ENCODE measurements at regions of chr6 and their contacts with region 1.

Region 1: GRCh38 chr6:2524090-2524489 is 226.6 kb downstream of the MYLK4 start:
- DNase-seq: no peak
- ATAC-seq: no peak
- H3K4me3 ChIP-seq: no peak overlapping the region
- H3K4me3 Mint-ChIP-seq: no peak overlapping the region
- H3K27ac ChIP-seq: no peak overlapping the region
- H3K27ac Mint-ChIP-seq: no peak overlapping the region
- H3K4me1 ChIP-seq: no peaks in the 10 kb centered on the region
- H3K4me1 Mint-ChIP-seq: peaks cover 7 to 11% (median 8%) of the 10 kb centered on the region in 3 donors
- H3K27me3 ChIP-seq: peaks cover 0 to 12% of the 10 kb centered on the region in 2 experiments
- H3K27me3 Mint-ChIP-seq: peaks cover 23 to 34% of the 10 kb centered on the region in 2 donors

Region 2: DNA sequence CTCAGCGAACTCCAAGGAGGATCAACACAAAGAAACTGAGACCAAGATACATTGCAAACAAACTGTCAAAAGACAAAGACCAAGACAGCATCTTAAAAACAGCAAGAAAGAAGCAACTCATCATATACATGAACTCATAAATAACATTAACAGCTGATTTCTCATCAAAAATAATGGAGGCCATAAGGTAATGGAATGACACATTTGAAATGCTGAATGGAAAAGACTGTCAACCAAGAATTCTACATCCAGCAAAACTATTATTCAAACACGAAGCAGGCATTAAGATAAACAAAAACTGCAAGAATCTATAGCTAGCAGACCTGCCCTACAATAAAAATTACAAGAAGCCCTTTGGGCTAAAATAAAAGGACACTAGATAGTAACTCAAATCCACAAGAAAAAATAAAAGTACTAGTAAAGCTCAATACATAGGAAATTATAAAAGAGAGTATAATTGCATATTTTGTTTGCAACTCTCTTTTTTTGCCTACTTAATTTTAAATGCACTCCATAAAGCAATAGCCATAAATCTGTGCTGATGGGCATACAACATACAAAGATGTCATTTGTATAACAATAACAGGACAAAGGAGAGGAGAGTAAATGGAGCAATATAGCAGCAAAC is 1172.6 kb before region 1 on chr6:
- CTCF ChIA-PET with region 1: no interaction called
- POLR2A ChIA-PET with region 1: no interaction called
- DNase-seq: no peak
- ATAC-seq: no peak
- H3K4me3 ChIP-seq: no peak overlapping the region
- H3K4me3 Mint-ChIP-seq: no peak overlapping the region
- H3K27ac ChIP-seq: no peak overlapping the region
- H3K27ac Mint-ChIP-seq: no peak overlapping the region
- H3K4me1 ChIP-seq: no peaks in the 10 kb centered on the region
- H3K4me1 Mint-ChIP-seq: no peaks in the 10 kb centered on the region
- H3K27me3 ChIP-seq: peaks cover 2 to 11% of the 10 kb centered on the region in 2 experiments
- H3K27me3 Mint-ChIP-seq: peaks cover 56 to 62% of the 10 kb centered on the region in 2 donors

Region 3: DNA sequence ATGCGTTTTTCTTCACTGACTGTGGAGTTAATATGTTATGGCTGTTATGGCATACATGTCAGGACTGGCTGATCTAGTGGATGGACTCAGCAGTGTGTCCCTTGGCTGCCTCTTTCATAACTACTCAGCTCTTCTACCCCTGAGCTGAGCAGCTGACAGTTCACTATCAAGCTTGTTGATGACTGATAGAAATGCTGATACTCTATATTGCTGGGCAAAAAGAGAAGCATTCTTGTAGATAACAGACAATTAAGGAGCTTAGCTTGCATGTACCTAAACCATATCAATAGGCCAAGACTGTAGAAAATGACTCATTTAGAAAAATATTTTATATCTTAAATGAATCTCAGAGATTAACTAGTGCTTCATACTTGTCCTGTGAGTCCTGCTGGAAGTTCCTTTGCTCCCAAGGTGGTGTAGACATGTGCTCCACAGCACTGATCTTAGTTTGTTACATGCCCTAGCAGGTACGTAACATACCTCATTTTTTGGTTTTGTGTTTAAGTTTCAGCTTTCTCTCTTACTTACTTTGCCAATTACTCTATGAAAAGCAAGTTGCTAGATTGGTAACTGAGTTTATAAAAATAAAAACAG is 515.6 kb before region 1 on chr6:
- CTCF ChIA-PET with region 1: no interaction called
- POLR2A ChIA-PET with region 1: no interaction called
- DNase-seq: no peak
- ATAC-seq: no peak
- H3K4me3 ChIP-seq: no peak overlapping the region
- H3K4me3 Mint-ChIP-seq: no peak overlapping the region
- H3K27ac ChIP-seq: no peak overlapping the region
- H3K27ac Mint-ChIP-seq: no peak overlapping the region
- H3K4me1 ChIP-seq: no peaks in the 10 kb centered on the region
- H3K4me1 Mint-ChIP-seq: no peaks in the 10 kb centered on the region
- H3K27me3 ChIP-seq: no peaks in the 10 kb centered on the region
- H3K27me3 Mint-ChIP-seq: no peaks in the 10 kb centered on the region

Region 4: DNA sequence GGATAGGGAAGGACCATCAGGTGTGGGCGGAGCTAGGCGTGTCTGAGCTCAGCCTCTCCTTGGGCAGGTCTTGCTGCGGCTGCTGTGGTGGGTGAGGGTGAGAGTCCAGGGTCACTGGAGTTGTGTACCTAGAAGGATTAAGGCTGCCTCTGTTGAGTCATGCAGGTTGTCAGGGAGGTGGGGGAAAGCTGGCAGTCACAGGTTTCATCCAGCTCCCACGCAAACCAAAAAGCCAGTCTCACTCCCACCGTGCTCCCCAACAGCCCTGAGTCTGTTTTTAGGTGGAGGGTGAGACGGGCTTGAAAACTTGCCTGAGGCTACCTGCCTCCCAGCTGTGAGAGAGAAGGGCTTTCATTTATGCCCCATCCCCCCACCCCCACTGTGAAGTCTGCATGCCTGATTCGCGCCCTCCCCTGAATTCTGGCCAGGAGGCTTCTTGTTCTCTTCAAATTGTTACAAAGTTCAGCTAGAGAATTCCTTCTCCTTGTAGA is 65.1 kb after region 1 on chr6:
- CTCF ChIA-PET with region 1: interaction called in 1 of 2 experiments, 15 read pairs
- POLR2A ChIA-PET with region 1: no interaction called
- DNase-seq: no peak
- ATAC-seq: no peak
- H3K4me3 ChIP-seq: no peak overlapping the region
- H3K4me3 Mint-ChIP-seq: no peak overlapping the region
- H3K27ac ChIP-seq: no peak overlapping the region
- H3K27ac Mint-ChIP-seq: no peak overlapping the region
- H3K4me1 ChIP-seq: no peaks in the 10 kb centered on the region
- H3K4me1 Mint-ChIP-seq: no peaks in the 10 kb centered on the region
- H3K27me3 ChIP-seq: peaks cover 0 to 32% of the 10 kb centered on the region in 2 experiments
- H3K27me3 Mint-ChIP-seq: peaks cover 12 to 24% of the 10 kb centered on the region in 2 donors

Measured in T-cell (primary cell).